ENCODE measurements at regions of chr12 and their contacts with region 1.

Region 1: GRCh38 chr12:57063991-57064685 is 14.2 kb upstream of the MYO1A start:
- DNase-seq: no peak
- H3K4me3 ChIP-seq: no peak overlapping the region
- H3K27ac ChIP-seq: no peak overlapping the region
- H3K27me3 ChIP-seq: no peaks in the 10 kb centered on the region
- CTCF ChIP-seq: no peak

Region 2: GRCh38 chr12:57016318-57016717 is 47.8 kb before region 1 on chr12 and contains the start of gene TAC3:
- CTCF ChIA-PET with region 1: interaction called, 273 read pairs
- POLR2A ChIA-PET with region 1: no interaction called
- DNase-seq: no peak
- H3K4me3 ChIP-seq: no peak within 1 kb of the TSS
- H3K27ac ChIP-seq: no peak within 1 kb of the TSS
- H3K27me3 ChIP-seq: peaks cover 43% of the 10 kb centered on the region
- CTCF ChIP-seq: no peak
- polyA plus RNA-seq, gene TAC3: 8.0 and 8.9 TPM in 2 replicates

Region 3: DNA sequence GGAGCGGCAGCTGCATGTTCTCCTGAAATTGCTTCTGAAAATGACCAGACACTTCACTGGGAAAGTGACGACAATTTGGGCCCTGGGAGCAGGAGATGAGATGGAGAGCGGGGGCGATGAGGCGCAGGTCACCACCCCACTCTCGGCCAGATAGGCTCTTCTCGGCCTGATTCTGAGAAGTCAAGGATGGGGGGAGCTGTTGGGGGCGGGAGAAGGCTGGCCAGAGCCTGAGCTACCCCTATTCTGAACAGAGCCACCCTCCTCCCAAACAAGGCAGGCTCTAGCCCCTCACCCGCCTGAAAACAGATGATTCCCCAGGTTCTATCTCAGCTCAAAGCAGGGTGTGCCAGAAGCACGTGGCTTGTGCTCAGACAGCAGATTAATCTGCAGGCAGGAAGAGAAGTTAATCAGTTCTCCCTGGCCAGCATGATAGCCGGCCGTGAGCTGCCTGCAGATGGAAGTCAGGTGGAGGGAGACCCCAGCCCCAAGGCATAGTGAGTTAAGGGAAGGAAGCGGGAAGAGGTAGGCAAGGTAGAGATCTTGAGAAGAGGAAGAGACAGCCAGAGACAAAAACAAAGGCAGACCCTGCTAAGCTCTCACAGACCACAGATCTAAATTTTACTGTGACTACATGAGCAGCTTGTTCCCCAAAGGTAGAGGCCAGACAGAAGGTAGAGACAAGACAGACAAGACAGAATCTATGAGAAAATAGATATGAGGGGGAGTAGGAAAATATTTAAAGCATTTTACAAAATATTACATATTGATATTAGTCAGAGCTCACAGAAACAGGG is 36.9 kb before region 1 on chr12:
- CTCF ChIA-PET with region 1: interaction called, 11 read pairs
- POLR2A ChIA-PET with region 1: no interaction called
- DNase-seq: no peak
- H3K4me3 ChIP-seq: no peak overlapping the region
- H3K27ac ChIP-seq: no peak overlapping the region
- H3K27me3 ChIP-seq: peaks cover 54% of the 10 kb centered on the region
- CTCF ChIP-seq: no peak

Region 4: GRCh38 chr12:57214387-57214781 is 150.2 kb after region 1 on chr12:
- CTCF ChIA-PET with region 1: no interaction called
- POLR2A ChIA-PET with region 1: no interaction called
- DNase-seq: peak; percentile 21
- H3K4me3 ChIP-seq: no peak overlapping the region
- H3K27ac ChIP-seq: no peak overlapping the region
- H3K27me3 ChIP-seq: peaks cover 35% of the 10 kb centered on the region
- CTCF ChIP-seq: peak; percentile 79